Dorsolateral prefrontal cortex (tissue), 120 donors: ENCODE measurements at regions of chr7 and their contacts with region 1.

Region 1: GRCh38 chr7:16564909-16565426 is 38.3 kb downstream of the LRRC72 start:
- DNase-seq: no peak
- H3K4me3 ChIP-seq: peak overlapping the region in 9 of 59 donors; percentile 9 to 43 (median 22)
- H3K27ac ChIP-seq: no peak overlapping the region
- H3K27me3 ChIP-seq: peaks cover 0 to 3% (median 0%) of the 10 kb centered on the region in 45 donors
- CTCF ChIP-seq: peak; percentile 67 to 94 (median 84)

Region 2: GRCh38 chr7:16078076-16078952 is 486.7 kb before region 1 on chr7:
- intact Hi-C with region 1: loop called (anchors 2 to 5 kb)
- DNase-seq: peak in 2 of 10 donors; percentile 35 to 42
- H3K4me3 ChIP-seq: no peak overlapping the region
- H3K27ac ChIP-seq: no peak overlapping the region
- H3K27me3 ChIP-seq: no peaks in the 10 kb centered on the region
- CTCF ChIP-seq: peak; percentile 55 to 86 (median 76)

Region 3: DNA sequence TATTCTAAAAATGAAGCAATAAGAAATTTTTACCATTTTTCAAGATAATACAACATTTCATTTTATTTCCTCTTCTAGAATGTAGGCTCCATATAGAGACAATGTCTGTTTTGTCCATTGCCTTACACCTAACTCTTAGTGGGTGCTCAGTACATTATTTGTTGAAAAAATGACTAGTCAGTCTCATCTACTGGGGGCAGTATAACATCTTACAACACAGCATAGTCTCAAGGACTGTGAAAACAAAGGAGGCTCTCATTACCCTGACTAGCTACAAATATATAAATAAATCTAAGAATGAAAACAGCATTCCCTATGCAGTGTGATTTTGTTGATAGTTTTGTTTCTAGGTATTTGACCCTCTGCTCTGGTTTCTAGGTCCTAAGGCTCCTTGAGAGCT is 155.2 kb before region 1 on chr7:
- intact Hi-C with region 1: loop called in 1 of 2 experiments (anchors 5 kb)
- DNase-seq: no peak
- H3K4me3 ChIP-seq: no peak overlapping the region
- H3K27ac ChIP-seq: peak overlapping the region in 4 of 59 donors; percentile 9 to 50 (median 32)
- H3K27me3 ChIP-seq: no peaks in the 10 kb centered on the region
- CTCF ChIP-seq: peak in 50 of 56 donors; percentile 3 to 72 (median 42)

Region 4: DNA sequence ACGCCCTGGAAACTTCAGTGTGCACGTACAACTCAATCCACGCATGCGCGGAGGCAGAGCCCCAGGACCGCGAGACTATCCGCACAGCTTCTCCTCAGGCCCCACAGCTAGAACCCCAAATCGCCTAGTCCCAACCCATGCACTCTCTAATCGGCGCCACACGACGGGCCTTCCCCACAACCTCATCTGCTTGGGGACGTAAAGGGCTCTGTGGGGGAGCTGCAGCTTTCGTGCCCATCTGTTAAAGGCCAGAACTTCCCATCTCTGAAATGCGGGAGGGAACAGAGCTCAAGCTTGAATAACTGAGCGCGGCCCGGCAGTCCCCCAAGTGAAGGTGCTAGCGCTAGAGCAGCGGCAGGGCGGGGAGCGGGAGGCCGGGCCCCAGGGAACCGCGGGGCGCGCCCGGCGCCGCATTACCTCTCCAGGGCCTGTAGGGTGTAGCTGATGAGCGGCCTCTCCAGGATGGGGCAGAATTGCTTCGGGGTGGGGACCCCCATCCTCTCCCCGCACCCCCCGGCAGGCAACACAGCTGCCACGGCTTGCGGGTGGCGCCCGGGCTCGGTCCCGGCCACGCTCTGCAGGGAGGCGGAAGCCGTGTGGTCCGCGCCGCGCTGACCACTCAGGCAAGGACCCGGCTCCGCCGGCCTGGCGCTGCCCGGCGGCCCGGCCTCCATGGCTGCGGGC is 144.2 kb before region 1 on chr7:
- intact Hi-C with region 1: loop called in 1 of 2 experiments (anchors 5 kb)
- DNase-seq: peak; percentile 77 to 90 (median 87)
- H3K4me3 ChIP-seq: peak overlapping the region; percentile 41 to 88 (median 77)
- H3K27ac ChIP-seq: peak overlapping the region; percentile 92 to 100 (median 98)
- H3K27me3 ChIP-seq: no peaks in the 10 kb centered on the region
- CTCF ChIP-seq: peak in 29 of 56 donors; percentile 3 to 45 (median 25)

Region 5: DNA sequence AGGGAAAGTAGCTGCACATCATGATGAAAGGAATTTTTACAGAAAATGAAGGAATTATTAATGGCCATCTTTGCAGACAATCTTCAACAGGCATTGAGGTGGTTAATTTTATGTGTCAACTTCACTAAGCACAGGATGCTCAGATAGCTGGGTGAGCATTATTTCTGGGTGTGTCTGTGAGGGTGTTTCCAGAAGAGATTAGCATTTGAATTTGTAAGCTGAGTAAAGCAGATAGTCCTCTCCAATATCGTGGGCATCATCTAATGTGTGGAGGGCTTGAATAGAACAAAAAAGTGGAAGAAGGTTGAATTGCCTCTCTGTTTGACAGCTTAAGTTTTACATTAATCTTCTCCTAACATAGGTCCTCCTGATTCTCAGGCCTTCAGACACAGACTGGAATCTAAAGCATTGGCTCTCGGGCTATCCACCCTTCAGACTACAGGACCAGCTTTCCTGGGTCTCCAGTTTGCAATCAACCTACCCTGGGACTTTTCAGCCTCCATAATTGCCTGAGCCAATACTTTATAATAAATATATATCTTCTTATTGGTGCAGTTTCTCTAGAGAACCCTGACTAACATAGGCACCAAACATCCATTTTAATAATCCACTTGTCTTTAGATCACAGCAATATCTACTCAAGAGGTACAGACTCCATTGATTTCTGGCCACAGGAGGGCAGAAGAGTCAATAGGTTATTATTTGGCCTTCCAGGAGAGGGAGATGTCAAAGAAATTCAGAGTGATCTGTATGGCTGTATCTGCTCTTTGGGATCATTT is 133.1 kb before region 1 on chr7:
- intact Hi-C with region 1: loop called (anchors 2 to 5 kb)
- DNase-seq: peak in 2 of 10 donors; percentile 35 to 36
- H3K4me3 ChIP-seq: no peak overlapping the region
- H3K27ac ChIP-seq: no peak overlapping the region
- H3K27me3 ChIP-seq: no peaks in the 10 kb centered on the region
- CTCF ChIP-seq: peak in 55 of 56 donors; percentile 17 to 82 (median 59)

Region 6: DNA sequence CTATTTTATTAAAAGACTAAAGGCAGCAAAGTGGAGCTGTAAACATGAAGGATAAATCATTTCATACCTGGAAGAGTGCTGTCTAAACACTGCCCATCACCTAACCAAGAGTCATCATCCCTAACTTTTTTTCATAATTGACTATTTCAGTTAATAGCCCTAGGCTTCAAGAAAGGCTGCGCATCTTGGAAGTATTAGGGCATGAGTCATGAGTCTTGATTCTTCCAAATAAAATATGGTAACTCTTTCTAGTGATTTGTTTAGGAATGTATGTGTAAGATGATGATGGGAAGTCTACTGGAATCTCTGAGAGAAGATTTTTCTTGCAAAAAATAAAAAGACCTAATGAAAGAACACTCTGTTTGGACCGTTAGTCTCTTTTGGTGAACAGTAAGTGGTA is 525.8 kb after region 1 on chr7:
- intact Hi-C with region 1: no loop called
- DNase-seq: no peak
- H3K4me3 ChIP-seq: no peak overlapping the region
- H3K27ac ChIP-seq: no peak overlapping the region
- H3K27me3 ChIP-seq: no peaks in the 10 kb centered on the region
- CTCF ChIP-seq: no peak